ENCODE measurements at regions of chr13 and their contacts with region 1.

Region 1: DNA sequence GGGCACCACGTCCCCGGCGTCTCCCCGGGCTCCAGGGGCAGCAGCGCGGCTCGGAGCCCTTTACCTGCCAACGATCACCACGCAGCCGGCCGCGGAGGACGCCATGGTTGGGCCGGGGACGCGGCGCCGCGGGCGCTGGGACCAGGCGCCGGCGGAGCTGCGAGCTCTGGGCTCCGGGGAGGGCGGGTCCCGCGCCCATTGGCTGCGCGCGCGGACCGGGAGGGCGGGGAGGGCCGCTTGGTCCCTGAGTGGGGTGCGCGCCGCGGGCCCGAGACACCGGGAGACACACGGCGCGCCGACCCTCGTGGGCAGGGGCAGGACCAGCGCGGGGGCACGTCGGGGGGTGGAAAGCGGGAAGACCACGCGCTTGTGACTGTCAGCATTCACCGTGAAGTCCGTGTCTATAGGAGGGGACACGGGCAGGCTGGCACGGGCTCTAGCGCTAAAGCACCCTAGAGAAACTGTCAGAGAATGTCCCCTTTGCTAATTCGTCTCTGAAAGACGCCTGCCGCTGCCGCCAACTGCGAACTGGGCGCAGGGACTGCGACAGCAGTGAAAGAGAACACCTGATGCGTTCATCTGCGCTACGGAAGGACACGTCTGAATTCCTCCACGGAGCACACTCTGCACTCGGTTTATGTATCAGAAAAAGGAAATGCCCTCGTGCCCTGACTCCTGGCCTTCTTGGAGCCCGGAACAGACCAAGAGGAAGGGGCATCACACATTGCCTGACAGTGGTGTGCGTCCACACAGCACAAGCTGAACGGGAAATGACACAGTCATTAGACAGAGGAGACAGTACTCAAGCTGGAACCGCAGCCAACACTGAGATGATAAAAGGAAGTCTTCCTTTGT is at the start of gene CRYL1:
- DNase-seq: peak; percentile 50
- H3K4me3 Mint-ChIP-seq: peak within 1 kb of the TSS; percentile 83
- H3K27ac Mint-ChIP-seq: peak within 1 kb of the TSS; percentile 70
- H3K4me1 Mint-ChIP-seq: peaks cover 6% of the 10 kb centered on the region
- H3K27me3 Mint-ChIP-seq: no peaks in the 10 kb centered on the region
- CTCF ChIP-seq: no peak
- total RNA-seq, gene CRYL1: 15.1 and 21.2 TPM in 2 replicates

Region 2: DNA sequence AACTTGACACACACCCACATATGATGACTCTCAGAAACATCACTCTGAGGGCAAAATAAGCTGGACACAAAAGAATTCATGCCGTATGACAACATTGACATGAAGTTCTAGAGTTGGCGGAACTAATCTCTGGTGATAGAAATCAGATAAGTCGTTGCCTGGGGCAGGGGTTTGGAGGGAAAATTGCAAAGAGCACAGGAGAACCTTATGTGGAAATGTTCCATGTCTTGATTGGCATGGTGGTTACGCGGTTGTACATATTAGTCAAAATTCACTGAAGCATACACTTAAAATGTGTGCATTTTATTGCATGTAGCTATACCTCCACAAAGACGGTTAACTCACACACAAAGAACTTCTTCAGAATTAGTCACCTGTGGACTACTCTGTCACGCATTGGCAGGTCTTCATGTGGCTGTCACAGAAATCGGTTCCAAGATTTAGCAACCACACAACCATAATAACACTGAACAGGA is 156.0 kb before region 1 on chr13:
- CTCF ChIA-PET with region 1: no interaction called
- POLR2A ChIA-PET with region 1: no interaction called
- intact Hi-C with region 1: no loop called
- DNase-seq: peak; percentile 33
- H3K4me3 Mint-ChIP-seq: no peak overlapping the region
- H3K27ac Mint-ChIP-seq: peak overlapping the region; percentile 47
- H3K4me1 Mint-ChIP-seq: peaks cover 18% of the 10 kb centered on the region
- H3K27me3 Mint-ChIP-seq: no peaks in the 10 kb centered on the region
- CTCF ChIP-seq: no peak

Region 3: DNA sequence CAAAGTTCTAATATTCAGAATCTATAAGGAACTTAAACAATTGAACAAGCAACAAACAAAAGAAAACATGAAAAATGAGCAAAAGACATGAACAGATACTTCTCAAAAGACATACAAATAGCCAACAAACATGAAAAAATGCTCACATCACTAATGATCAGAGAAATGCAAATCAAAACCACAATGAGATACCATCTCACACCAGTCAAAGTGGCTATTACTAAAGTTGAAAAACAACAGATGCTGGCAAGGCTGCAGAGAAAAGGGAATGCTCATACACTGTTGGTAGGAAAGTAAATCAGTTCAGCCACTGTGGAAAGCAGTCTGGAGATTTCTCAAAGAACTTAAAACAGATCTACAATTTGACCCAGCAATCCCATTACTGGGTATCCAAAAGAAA is 74.5 kb before region 1 on chr13:
- CTCF ChIA-PET with region 1: no interaction called
- POLR2A ChIA-PET with region 1: no interaction called
- intact Hi-C with region 1: no loop called
- DNase-seq: no peak
- H3K4me3 Mint-ChIP-seq: no peak overlapping the region
- H3K27ac Mint-ChIP-seq: no peak overlapping the region
- H3K4me1 Mint-ChIP-seq: peaks cover under 1% of the 10 kb centered on the region
- H3K27me3 Mint-ChIP-seq: no peaks in the 10 kb centered on the region
- CTCF ChIP-seq: no peak

Region 4: DNA sequence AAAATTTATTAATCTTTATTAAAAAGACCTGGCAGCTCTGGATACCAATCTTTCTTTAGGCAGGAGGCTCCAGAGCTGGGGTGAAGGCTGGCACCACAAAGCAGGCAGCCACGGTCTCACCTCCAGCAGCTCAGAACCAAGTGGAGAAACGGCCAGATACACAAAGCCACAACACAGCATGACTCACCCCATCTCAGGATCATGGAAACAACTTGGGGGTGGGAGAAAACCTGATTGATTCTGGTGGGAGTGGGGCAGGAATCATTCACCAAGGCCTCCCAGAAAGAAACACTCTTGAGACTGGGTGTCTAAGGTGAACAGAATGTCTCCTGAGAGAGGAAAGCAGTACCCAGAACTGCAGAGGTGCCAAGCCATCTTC is 64.4 kb before region 1 on chr13:
- CTCF ChIA-PET with region 1: no interaction called
- POLR2A ChIA-PET with region 1: no interaction called
- intact Hi-C with region 1: no loop called
- DNase-seq: peak; percentile 36
- H3K4me3 Mint-ChIP-seq: no peak overlapping the region
- H3K27ac Mint-ChIP-seq: no peak overlapping the region
- H3K4me1 Mint-ChIP-seq: peaks cover 34% of the 10 kb centered on the region
- H3K27me3 Mint-ChIP-seq: no peaks in the 10 kb centered on the region
- CTCF ChIP-seq: no peak

Region 5: GRCh38 chr13:20703780-20704445 is 178.0 kb after region 1 on chr13:
- CTCF ChIA-PET with region 1: interaction called, 3 read pairs
- POLR2A ChIA-PET with region 1: no interaction called
- intact Hi-C with region 1: loop called (anchors 10 kb)
- DNase-seq: peak; percentile 64
- H3K4me3 Mint-ChIP-seq: peak overlapping the region; percentile 77
- H3K27ac Mint-ChIP-seq: no peak overlapping the region
- H3K4me1 Mint-ChIP-seq: peaks cover under 1% of the 10 kb centered on the region
- H3K27me3 Mint-ChIP-seq: no peaks in the 10 kb centered on the region
- CTCF ChIP-seq: peak; percentile 52

Measured in MCF 10A (cell line).